ENCODE measurements at regions of chr2 and their contacts with region 1.

Region 1: GRCh38 chr2:88892207-88892606 is 200.7 kb downstream of the RPIA start:
- DNase-seq: no peak
- H3K4me3 ChIP-seq: no peak overlapping the region
- H3K4me3 Mint-ChIP-seq: no peak overlapping the region
- H3K27ac ChIP-seq: no peak overlapping the region
- H3K27ac Mint-ChIP-seq: no peak overlapping the region
- H3K4me1 ChIP-seq: no peaks in the 10 kb centered on the region
- H3K4me1 Mint-ChIP-seq: no peaks in the 10 kb centered on the region
- H3K27me3 ChIP-seq: no peaks in the 10 kb centered on the region
- H3K27me3 Mint-ChIP-seq: peaks cover 3 to 5% of the 10 kb centered on the region in 2 donors

Region 2: GRCh38 chr2:88880441-88880953 is 11.7 kb before region 1 on chr2:
- CTCF ChIA-PET with region 1: interaction called, 13 read pairs
- POLR2A ChIA-PET with region 1: no interaction called
- intact Hi-C with region 1: no loop called
- DNase-seq: peak in 4 of 5 donors; percentile 26 to 32 (median 30)
- H3K4me3 ChIP-seq: no peak overlapping the region
- H3K4me3 Mint-ChIP-seq: no peak overlapping the region
- H3K27ac ChIP-seq: no peak overlapping the region
- H3K27ac Mint-ChIP-seq: peak overlapping the region in 1 of 7 donors; percentile 38
- H3K4me1 ChIP-seq: no peaks in the 10 kb centered on the region
- H3K4me1 Mint-ChIP-seq: peaks cover 0 to 1% (median 0%) of the 10 kb centered on the region in 4 donors
- H3K27me3 ChIP-seq: no peaks in the 10 kb centered on the region
- H3K27me3 Mint-ChIP-seq: peaks cover 2 to 7% of the 10 kb centered on the region in 2 donors